ENCODE measurements at regions of chr11 and their contacts with region 1.

Region 1: GRCh38 chr11:62435846-62436660 is 17.2 kb downstream of the SCGB1A1 start:
- DNase-seq: no peak

Region 2: GRCh38 chr11:62411524-62411923 is 24.5 kb before region 1 on chr11:
- intact Hi-C with region 1: no loop called
- DNase-seq: no peak

Region 3: DNA sequence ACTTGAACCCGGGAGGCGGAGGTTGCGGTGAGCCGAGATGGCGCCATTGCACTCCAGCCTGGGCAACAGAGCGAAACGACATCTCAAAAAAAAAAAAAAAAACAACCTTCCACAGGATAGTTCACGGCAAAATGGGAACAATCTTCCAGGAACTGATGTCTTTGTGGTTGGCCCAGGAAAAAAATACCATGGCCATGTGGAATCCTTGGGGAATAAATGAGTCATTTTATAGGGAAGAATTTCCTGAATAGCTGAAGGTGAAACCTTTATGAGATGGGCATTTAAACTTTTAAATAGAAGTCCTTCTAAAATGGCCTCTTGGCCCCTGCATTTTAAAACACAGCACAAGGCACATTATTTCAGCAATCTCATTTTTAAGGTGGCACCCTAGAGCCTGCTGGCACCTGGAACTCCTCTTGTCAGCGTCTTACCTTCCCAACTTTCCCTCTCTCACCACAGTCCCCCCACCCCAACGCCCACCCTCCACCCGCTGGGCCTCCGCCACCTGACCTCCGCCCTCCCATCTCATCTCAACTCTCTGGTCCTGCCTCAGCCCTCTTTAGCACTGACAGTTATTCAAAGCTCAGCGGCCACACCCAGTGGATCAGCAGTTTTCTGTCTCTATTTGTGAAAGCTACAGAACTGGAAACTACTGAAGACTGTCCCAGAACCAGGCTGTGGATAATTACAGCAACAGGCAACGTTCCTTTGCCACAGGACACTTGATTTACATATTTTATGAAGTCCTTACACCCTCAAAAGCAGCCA is 25.9 kb after region 1 on chr11:
- intact Hi-C with region 1: loop called in 1 of 2 experiments (anchors 1 kb)
- DNase-seq: no peak

Measured in posterior vena cava (tissue), 2 donors.